Calu3 (cell line): ENCODE measurements at regions of chr3 and their contacts with region 1.

Region 1: DNA sequence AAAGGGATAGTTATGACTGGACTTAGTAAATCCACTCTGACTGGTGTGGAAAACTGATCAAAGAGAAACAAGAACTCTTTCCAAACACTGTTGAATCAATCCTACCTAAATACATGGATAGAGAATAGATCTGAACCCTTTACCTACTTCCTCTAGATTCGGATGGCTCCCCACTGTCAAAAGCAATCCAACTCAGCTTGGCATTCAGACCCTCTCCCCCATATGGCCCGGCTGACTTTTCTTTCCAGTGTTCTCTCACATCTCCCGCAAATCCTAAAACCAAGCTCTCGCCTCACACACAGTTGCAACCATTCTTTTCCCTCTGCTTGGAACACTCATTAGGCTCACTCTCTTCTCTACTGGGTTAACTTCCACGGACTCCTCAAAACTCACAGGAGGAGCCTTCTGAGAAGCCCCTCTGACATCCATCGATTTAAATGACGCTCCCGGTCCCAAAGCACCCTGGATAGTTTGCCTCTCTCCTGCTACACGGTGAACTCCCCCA is 639 bp downstream of the SPICE1 start:
- DNase-seq: no peak
- H3K4me3 Mint-ChIP-seq: no peak overlapping the region
- H3K27ac Mint-ChIP-seq: no peak overlapping the region
- H3K4me1 Mint-ChIP-seq: peaks cover 14% of the 10 kb centered on the region
- H3K27me3 Mint-ChIP-seq: peaks cover 7% of the 10 kb centered on the region
- CTCF ChIP-seq: no peak

Region 2: GRCh38 chr3:113304856-113305540 is 209.3 kb before region 1 on chr3:
- CTCF ChIA-PET with region 1: no interaction called
- intact Hi-C with region 1: no loop called
- DNase-seq: no peak
- H3K4me3 Mint-ChIP-seq: no peak overlapping the region
- H3K27ac Mint-ChIP-seq: no peak overlapping the region
- H3K4me1 Mint-ChIP-seq: no peaks in the 10 kb centered on the region
- H3K27me3 Mint-ChIP-seq: no peaks in the 10 kb centered on the region
- CTCF ChIP-seq: no peak

Region 3: DNA sequence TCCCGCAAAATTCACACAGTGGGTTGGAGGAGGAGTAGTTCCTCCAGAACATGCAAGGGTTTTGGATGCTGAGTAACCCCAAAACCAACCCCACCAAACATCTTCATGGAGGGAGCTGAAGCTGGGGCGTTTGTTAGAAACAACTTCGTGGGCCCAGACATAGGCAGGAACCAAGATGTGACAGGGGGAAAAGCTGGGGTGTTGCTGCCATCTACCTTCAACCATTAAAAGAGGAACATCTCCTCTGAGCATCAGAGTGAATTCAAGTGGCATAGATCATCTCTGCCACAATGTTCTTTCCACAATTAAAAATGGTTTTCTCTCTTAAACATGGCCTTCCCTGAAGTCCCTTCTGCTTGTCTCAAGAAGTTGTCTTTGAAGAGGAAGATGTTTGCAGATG is 38.5 kb after region 1 on chr3:
- CTCF ChIA-PET with region 1: interaction called, 5 read pairs
- intact Hi-C with region 1: loop called (anchors 5 kb)
- DNase-seq: no peak
- H3K4me3 Mint-ChIP-seq: no peak overlapping the region
- H3K27ac Mint-ChIP-seq: no peak overlapping the region
- H3K4me1 Mint-ChIP-seq: peaks cover 31% of the 10 kb centered on the region
- H3K27me3 Mint-ChIP-seq: no peaks in the 10 kb centered on the region
- CTCF ChIP-seq: no peak

Region 4: GRCh38 chr3:113575206-113575605 is 60.9 kb after region 1 on chr3:
- CTCF ChIA-PET with region 1: interaction called, 23 read pairs
- intact Hi-C with region 1: no loop called
- DNase-seq: no peak
- H3K4me3 Mint-ChIP-seq: no peak overlapping the region
- H3K27ac Mint-ChIP-seq: no peak overlapping the region
- H3K4me1 Mint-ChIP-seq: peaks cover 17% of the 10 kb centered on the region
- H3K27me3 Mint-ChIP-seq: peaks cover 47% of the 10 kb centered on the region
- CTCF ChIP-seq: no peak

Region 5: DNA sequence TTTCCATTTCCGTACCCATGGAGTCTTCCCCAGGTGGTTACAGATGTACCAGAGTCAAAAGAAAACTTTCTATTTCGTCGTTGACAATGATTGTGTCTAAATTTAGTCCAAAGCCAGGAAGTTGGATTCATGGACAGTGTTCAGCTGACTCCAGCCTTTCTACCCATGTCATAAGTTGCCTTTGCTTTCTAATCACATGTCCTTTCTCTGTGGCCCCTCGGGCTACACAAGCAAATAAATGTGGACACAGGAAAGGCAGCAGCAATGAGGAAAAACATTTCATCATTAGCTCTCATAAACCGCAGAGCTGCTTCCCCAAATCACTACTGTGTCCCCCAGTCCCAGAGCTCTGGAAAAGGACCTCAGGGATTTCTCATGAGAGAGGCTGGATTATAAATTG is 100.1 kb after region 1 on chr3:
- CTCF ChIA-PET with region 1: no interaction called
- intact Hi-C with region 1: no loop called
- DNase-seq: no peak
- H3K4me3 Mint-ChIP-seq: no peak overlapping the region
- H3K27ac Mint-ChIP-seq: no peak overlapping the region
- H3K4me1 Mint-ChIP-seq: no peaks in the 10 kb centered on the region
- H3K27me3 Mint-ChIP-seq: peaks cover 2% of the 10 kb centered on the region
- CTCF ChIP-seq: no peak